ENCODE measurements at regions of chr7 and their contacts with region 1.

Region 1: GRCh38 chr7:151838861-151839391 is 38.0 kb downstream of the PRKAG2 start:
- H3K4me3 Mint-ChIP-seq: peak overlapping the region; percentile 77
- H3K27ac Mint-ChIP-seq: peak overlapping the region; percentile 85
- H3K4me1 Mint-ChIP-seq: peaks cover 61% of the 10 kb centered on the region
- H3K27me3 Mint-ChIP-seq: no peaks in the 10 kb centered on the region

Region 2: GRCh38 chr7:151759591-151760042 is 79.3 kb before region 1 on chr7:
- intact Hi-C with region 1: no loop called
- H3K4me3 Mint-ChIP-seq: no peak overlapping the region
- H3K27ac Mint-ChIP-seq: no peak overlapping the region
- H3K4me1 Mint-ChIP-seq: peaks cover 60% of the 10 kb centered on the region
- H3K27me3 Mint-ChIP-seq: no peaks in the 10 kb centered on the region

Region 3: GRCh38 chr7:151795168-151795811 is 43.6 kb before region 1 on chr7:
- intact Hi-C with region 1: loop called (anchors 5 kb)
- H3K4me3 Mint-ChIP-seq: no peak overlapping the region
- H3K27ac Mint-ChIP-seq: peak overlapping the region; percentile 93
- H3K4me1 Mint-ChIP-seq: peaks cover 93% of the 10 kb centered on the region
- H3K27me3 Mint-ChIP-seq: no peaks in the 10 kb centered on the region